ENCODE measurements at regions of chr17 and their contacts with region 1.

Region 1: GRCh38 chr17:76278952-76279741 is 14.0 kb downstream of the UBALD2 start:
- DNase-seq: peak; percentile 73 to 98
- H3K4me3 ChIP-seq: no peak overlapping the region
- H3K27ac ChIP-seq: no peak overlapping the region
- H3K4me1 ChIP-seq: peaks cover 0 to 4% (median under 1%) of the 10 kb centered on the region in 4 experiments; a peak in 3 of 7 replicates
- H3K27me3 ChIP-seq: no peaks in the 10 kb centered on the region
- CTCF ChIP-seq: peak; percentile 84 to 97 (median 94)
- EP300 ChIP-seq: no peak
- POLR2A ChIP-seq: no peak
- RAD21 ChIP-seq: peak; percentile 95 to 99

Region 2: GRCh38 chr17:76103274-76104139 is 175.6 kb before region 1 on chr17 and contains the start of gene EXOC7:
- CTCF ChIA-PET with region 1: interaction called, 14 read pairs
- POLR2A ChIA-PET with region 1: interaction called, 3 read pairs
- DNase-seq: peak; percentile 73 to 98
- H3K4me3 ChIP-seq: peak within 1 kb of the TSS; percentile 53 to 81 (median 73)
- H3K27ac ChIP-seq: peak within 1 kb of the TSS; percentile 78
- H3K4me1 ChIP-seq: peaks cover 6 to 16% (median 9%) of the 10 kb centered on the region in 4 experiments; a peak in 6 of 7 replicates
- H3K27me3 ChIP-seq: no peaks in the 10 kb centered on the region
- CTCF ChIP-seq: no peak
- EP300 ChIP-seq: no peak
- POLR2A ChIP-seq: peak in 1 of 2 experiments; percentile 66; a peak in 2 of 3 replicates
- RAD21 ChIP-seq: peak in 1 of 2 experiments; percentile 14; a peak in 1 of 4 replicates
- total RNA-seq, gene EXOC7: 92.6 and 95.3 TPM in 2 replicates

Region 3: DNA sequence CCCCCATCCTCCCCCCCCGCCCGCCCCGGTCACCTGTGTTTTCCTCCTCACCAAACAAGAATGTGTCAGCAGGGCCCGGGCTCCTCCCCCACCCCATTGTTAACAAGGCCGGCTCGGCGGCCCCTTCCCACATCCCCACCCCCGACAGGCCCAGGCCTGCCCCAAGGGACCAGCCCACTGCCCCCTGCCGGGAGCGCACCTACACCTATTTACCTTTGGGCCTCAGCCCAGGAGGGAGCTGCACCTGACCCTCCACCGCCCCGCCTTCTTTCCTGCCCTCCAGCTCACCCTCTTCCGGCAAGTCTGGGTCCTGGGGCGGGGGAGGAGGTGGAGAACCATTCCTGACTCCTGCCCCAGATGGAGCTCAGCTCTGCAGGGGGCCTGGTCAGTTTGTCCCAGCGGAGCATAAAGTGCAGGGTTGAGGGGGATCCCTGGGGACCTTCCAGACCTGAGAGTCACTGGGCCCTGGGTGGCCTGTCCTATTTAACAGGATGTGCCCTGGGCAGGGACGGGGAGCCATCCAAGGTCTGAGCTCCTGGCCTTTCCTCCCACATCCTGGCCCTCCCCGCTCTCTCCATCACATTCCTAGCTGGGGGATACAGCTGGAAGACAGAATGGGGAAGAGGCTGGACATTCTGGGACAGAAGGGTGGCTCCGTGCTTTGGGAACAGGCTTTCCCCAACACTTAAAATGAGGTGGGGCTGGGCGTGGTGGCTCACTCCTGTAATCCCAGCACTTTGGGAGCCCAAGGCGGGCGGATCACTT is 146.4 kb before region 1 on chr17:
- CTCF ChIA-PET with region 1: interaction called, 27 read pairs
- POLR2A ChIA-PET with region 1: no interaction called
- DNase-seq: peak; percentile 88 to 89
- H3K4me3 ChIP-seq: peak overlapping the region in 3 of 4 experiments; percentile 2 to 47 (median 19); a peak in 2 of 8 replicates
- H3K27ac ChIP-seq: 0 out of 2 replicates have a peak overlapping the region, but pooled peaks have one; percentile 41
- H3K4me1 ChIP-seq: peaks cover 18 to 62% (median 53%) of the 10 kb centered on the region in 4 experiments
- H3K27me3 ChIP-seq: peaks cover 6 to 31% (median 18%) of the 10 kb centered on the region in 4 experiments
- CTCF ChIP-seq: peak in 2 of 3 experiments; percentile 2 to 3; a peak in 1 of 4 replicates
- EP300 ChIP-seq: no peak
- POLR2A ChIP-seq: no peak
- RAD21 ChIP-seq: 0 out of 4 replicates have a peak, but pooled peaks of 1 of the 2 experiments have one; percentile 2

Region 4: DNA sequence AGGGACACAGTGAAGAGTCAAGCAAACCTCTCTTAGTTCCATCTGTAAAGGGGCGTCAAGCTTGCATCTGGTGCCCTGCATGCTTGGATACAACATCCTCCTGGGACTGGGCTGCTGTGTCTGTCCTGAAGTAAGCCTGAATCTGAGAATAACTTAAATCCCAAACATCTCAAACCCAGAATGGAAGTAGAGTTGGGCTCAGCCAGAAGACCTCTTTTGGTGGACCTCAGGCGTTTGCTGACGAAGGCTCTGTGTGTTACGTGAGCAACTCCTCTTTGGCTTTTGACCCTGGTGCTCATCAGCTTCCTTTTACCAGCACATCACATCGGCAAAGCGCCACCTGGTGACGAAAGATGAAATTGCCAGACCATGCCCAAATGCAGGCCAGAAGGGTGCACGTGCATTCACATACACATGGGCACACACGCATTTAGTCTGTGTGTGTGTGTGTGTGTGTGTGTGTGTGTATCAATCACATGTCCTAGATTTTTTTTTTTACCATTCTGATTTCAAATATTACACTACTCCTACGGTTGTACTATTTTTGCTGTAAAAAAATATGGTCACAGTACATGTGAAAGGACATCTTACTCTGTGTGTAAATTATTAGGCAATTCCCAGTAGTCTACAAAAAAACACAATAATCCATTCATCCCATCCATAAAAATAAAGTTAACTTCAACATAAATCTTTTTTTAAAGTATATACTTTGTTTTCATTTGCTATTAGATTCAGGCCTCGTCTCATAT is 97.0 kb before region 1 on chr17:
- CTCF ChIA-PET with region 1: interaction called, 84 read pairs
- POLR2A ChIA-PET with region 1: no interaction called
- DNase-seq: peak; percentile 82 to 99
- H3K4me3 ChIP-seq: no peak overlapping the region
- H3K27ac ChIP-seq: no peak overlapping the region
- H3K4me1 ChIP-seq: peaks cover 0 to 2% (median 0%) of the 10 kb centered on the region in 4 experiments; a peak in 2 of 7 replicates
- H3K27me3 ChIP-seq: no peaks in the 10 kb centered on the region; a peak in 1 of 7 replicates
- CTCF ChIP-seq: peak; percentile 86 to 98 (median 97)
- EP300 ChIP-seq: no peak
- POLR2A ChIP-seq: no peak
- RAD21 ChIP-seq: peak; percentile 80 to 87

Region 5: DNA sequence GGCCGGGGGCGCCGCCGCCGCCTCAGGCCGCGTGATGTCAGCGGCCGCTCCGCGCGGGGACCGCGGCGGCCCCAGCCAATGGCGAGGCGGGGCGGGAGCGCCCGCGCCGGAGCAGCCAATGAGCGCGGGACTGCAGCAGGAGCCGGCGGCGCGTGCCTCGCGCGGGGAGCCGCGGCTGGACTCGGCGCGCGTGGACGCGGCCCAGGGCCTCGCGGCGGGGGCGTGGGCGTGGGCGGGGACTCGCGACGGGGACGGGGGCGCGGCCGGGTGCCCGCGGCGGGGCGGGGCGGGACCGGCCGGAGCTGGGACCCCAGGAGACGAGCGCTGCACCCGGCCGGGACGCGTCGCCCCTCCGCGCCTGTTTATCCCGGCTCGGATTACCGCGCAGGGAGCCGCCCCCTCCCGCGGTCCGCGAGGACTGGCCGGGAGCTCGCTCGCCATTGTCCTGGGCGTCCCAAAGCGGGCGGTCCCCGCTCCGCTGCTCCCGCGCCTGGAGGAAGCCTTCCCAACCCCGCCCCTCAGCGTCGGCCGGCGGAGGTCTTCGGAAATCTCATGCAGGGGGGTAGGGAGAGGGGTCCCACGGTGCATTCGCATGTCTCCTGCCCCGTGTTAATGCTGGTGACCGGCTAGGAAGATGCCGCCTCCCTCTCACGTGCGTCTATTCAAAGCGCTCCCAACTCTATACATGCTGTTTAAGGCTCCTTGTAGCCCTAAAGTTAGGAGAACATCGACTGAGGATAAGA is 38.5 kb before region 1 on chr17 and contains the start of gene RNF157:
- CTCF ChIA-PET with region 1: interaction called, 18 read pairs
- POLR2A ChIA-PET with region 1: interaction called, 7 read pairs
- DNase-seq: peak in 1 of 2 experiments; percentile 82
- H3K4me3 ChIP-seq: peak within 1 kb of the TSS; percentile 36 to 69 (median 52)
- H3K27ac ChIP-seq: no peak within 1 kb of the TSS; the same call in 1 of the 2 replicates
- H3K4me1 ChIP-seq: peaks cover 0 to 6% (median 4%) of the 10 kb centered on the region in 4 experiments; a peak in 5 of 7 replicates
- H3K27me3 ChIP-seq: peaks cover 5 to 42% (median 31%) of the 10 kb centered on the region in 4 experiments
- CTCF ChIP-seq: no peak
- EP300 ChIP-seq: no peak
- POLR2A ChIP-seq: peak in 1 of 2 experiments; percentile 53; a peak in 1 of 3 replicates
- RAD21 ChIP-seq: 0 out of 4 replicates have a peak, but pooled peaks of 1 of the 2 experiments have one; percentile 0
- total RNA-seq, gene RNF157: 13.4 and 14.9 TPM in 2 replicates

Region 6: DNA sequence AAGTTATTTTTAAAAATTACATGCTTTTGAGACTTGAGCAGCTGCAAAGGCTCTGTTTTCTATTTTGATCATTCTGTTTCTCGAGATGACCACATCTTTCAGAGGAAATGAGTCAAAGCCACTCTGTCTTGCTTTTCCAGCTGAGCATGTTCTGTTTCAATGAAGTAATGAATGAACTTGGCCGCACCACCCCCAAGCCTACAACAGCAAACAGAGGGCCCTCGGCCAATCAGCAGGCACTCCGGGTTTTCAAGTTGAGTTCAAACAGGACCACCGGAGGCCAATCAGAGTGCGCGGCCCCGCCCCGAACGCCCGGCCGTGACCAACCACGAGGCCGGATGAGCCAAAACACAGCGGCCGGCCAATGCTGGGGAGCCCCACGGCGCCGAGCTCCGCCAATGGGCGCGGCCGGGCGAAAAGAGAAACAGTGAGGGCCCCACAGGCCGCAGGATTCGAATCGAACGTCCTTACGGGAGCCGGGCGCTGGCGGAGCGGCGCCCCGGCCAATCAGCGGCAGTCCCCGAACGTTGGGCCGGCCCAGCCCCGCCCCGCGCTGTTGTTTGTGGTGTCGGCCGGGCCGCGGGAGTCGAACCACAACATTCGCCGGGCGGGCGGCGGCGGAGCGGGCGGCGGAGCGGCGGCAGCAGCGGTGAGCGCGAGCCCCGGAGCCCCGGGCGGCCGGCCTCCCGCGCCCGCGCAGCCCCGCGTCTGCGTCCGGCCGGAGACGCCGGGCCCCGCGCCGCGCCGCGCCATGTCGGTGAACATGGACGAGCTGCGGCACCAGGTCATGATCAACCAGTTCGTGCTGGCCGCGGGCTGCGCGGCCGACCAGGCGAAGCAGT is 14.2 kb before region 1 on chr17 and contains the start of gene UBALD2:
- CTCF ChIA-PET with region 1: interaction called, 63 read pairs
- POLR2A ChIA-PET with region 1: interaction called, 6 read pairs
- DNase-seq: peak; percentile 92 to 97
- H3K4me3 ChIP-seq: peak within 1 kb of the TSS; percentile 66 to 82 (median 78)
- H3K27ac ChIP-seq: 0 out of 2 replicates have a peak within 1 kb of the TSS, but pooled peaks have one; percentile 28
- H3K4me1 ChIP-seq: peaks cover 5 to 14% (median 8%) of the 10 kb centered on the region in 4 experiments
- H3K27me3 ChIP-seq: no peaks in the 10 kb centered on the region; a peak in 1 of 7 replicates
- CTCF ChIP-seq: no peak
- EP300 ChIP-seq: no peak
- POLR2A ChIP-seq: no peak
- RAD21 ChIP-seq: no peak
- total RNA-seq, gene UBALD2: 22.6 and 25.6 TPM in 2 replicates

Region 7: GRCh38 chr17:76452127-76452659 is 173.0 kb after region 1 on chr17:
- CTCF ChIA-PET with region 1: no interaction called
- POLR2A ChIA-PET with region 1: no interaction called
- DNase-seq: no peak
- H3K4me3 ChIP-seq: peak overlapping the region; percentile 67 to 84 (median 80)
- H3K27ac ChIP-seq: no peak overlapping the region
- H3K4me1 ChIP-seq: peaks cover 9 to 26% (median 18%) of the 10 kb centered on the region in 4 experiments
- H3K27me3 ChIP-seq: no peaks in the 10 kb centered on the region
- CTCF ChIP-seq: no peak
- EP300 ChIP-seq: no peak
- POLR2A ChIP-seq: no peak
- RAD21 ChIP-seq: no peak

Region 8: GRCh38 chr17:76481071-76481655 is 202.0 kb after region 1 on chr17:
- CTCF ChIA-PET with region 1: no interaction called
- POLR2A ChIA-PET with region 1: no interaction called
- DNase-seq: no peak
- H3K4me3 ChIP-seq: no peak overlapping the region
- H3K27ac ChIP-seq: no peak overlapping the region
- H3K4me1 ChIP-seq: no peaks in the 10 kb centered on the region
- H3K27me3 ChIP-seq: no peaks in the 10 kb centered on the region
- CTCF ChIP-seq: no peak
- EP300 ChIP-seq: no peak
- POLR2A ChIP-seq: no peak
- RAD21 ChIP-seq: no peak

Measured in H1 (cell line).